Aorta (tissue), 5 donors: ENCODE measurements at regions of chr10 and their contacts with region 1.

Region 1: GRCh38 chr10:112307358-112308124 is 24.3 kb downstream of the TECTB start:
- DNase-seq: no peak
- ATAC-seq: no peak
- H3K4me3 ChIP-seq: no peak overlapping the region
- H3K27ac ChIP-seq: peak overlapping the region in 1 of 2 donors; percentile 31
- H3K4me1 ChIP-seq: no peaks in the 10 kb centered on the region
- H3K27me3 ChIP-seq: no peaks in the 10 kb centered on the region

Region 2: DNA sequence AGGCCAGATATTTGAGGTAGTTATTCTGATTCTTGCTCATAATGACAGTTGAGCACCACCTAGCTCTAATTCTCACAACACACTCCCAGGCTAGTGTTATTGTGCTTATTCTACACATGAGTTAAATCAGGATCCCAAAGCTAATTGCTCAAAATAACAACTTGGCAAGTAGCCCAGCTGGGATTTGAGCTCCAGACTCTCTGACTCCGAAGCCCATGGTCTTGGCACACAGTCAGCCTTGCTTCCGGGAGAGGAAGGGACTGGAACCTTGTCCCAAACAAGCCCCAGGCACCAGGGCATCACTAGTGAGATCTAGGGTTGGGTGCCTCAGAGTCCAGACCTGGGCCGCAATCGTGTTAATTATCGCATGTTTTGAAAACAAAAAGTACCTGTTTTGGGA is 225.4 kb before region 1 on chr10:
- intact Hi-C with region 1: no loop called
- DNase-seq: peak in 1 of 2 donors; percentile 48
- ATAC-seq: no peak
- H3K4me3 ChIP-seq: no peak overlapping the region
- H3K27ac ChIP-seq: no peak overlapping the region
- H3K4me1 ChIP-seq: peaks cover 2% of the 10 kb centered on the region in 2 donors
- H3K27me3 ChIP-seq: no peaks in the 10 kb centered on the region

Region 3: GRCh38 chr10:112183329-112184051 is 124.1 kb before region 1 on chr10 and contains the start of gene GPAM:
- intact Hi-C with region 1: loop called (anchors 5 kb)
- DNase-seq: peak; percentile 96 to 99
- ATAC-seq: peak; percentile 98
- H3K4me3 ChIP-seq: peak within 1 kb of the TSS; percentile 63 to 76
- H3K27ac ChIP-seq: peak within 1 kb of the TSS; percentile 47 to 98
- H3K4me1 ChIP-seq: no peaks in the 10 kb centered on the region
- H3K27me3 ChIP-seq: no peaks in the 10 kb centered on the region
- total RNA-seq, gene GPAM: 11.4 to 13.7 TPM

Region 4: DNA sequence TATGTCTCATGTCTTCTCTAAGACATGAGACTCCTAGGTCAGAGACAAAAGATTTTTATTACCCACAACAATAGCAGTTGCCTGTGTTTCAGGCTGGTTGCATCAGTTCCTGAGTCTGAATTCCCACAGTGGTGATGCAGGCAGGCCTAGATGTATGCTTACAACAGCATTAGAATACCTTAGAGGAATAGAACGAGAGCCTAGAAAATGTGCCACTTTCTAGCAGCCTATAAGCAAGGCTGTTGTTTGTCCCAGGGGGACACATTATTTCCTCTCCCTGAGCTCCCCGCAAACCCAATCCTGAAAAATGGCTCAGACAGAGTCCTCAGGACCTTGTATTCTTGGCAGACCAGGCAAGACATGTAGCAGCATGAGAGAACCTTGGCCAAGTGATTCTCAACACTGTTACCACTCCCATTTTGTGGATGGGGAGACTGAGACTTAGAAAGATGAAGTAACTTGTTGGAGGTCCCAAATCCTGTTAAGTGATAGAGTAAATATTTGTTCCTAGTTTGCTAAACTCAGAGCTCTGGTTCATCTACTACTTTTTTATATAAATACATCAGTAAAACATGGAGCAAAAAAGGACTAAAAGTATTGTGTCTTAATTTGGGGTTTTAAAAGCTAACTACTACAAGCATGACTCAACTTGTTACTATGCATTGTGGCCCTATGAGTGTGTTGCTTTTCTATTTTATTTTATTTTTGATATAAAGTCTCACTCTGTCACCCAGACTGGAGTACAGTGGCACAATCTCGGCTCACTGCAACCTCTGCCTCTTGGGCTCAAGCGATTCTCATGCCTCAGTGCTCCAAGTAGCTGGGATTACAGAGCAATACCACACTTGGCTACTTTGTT is 153.7 kb after region 1 on chr10:
- intact Hi-C with region 1: no loop called
- DNase-seq: no peak
- ATAC-seq: no peak
- H3K4me3 ChIP-seq: no peak overlapping the region
- H3K27ac ChIP-seq: no peak overlapping the region
- H3K4me1 ChIP-seq: no peaks in the 10 kb centered on the region
- H3K27me3 ChIP-seq: no peaks in the 10 kb centered on the region